GM12878 (cell line): ENCODE measurements at regions of chr5 and their contacts with region 1.

Region 1: DNA sequence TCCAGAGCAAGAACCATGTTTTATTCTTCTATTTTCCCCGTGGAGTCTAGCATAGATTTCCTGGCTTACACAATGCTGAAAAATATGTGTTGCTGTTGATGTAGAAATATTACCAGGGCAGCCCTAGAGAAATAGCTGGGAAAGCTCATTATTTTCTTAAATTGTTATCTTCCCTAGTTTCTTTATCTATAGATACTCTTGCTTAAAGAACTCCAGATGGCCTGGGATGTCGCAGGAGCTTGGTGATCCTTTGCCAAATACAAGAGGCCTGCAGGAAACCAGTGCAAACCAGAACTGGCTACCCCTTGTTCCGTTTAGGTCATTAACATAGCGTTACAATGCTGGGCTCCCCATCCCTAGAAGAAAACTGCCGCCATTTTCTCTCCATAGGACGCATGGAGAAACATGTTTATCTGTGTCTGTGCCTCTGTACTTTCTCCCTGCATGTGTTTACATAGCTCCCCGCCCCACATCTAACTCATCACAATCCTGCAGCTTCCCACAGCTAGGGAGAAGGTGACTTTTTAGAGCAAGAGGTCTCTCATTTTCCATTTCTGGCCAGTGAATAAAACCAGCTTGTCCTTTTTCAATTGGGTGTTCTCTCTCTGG is 6.4 kb downstream of the PRLR start:
- DNase-seq: no peak
- ATAC-seq: no peak
- H3K4me3 ChIP-seq: no peak overlapping the region
- H3K27ac ChIP-seq: no peak overlapping the region
- H3K4me1 ChIP-seq: no peaks in the 10 kb centered on the region
- H3K27me3 ChIP-seq: no peaks in the 10 kb centered on the region; a peak in 2 of 4 replicates
- CTCF ChIP-seq: no peak
- EP300 ChIP-seq: no peak
- POLR2A ChIP-seq: no peak
- RAD21 ChIP-seq: no peak

Region 2: GRCh38 chr5:33556330-33557328 is 1667.3 kb before region 1 on chr5:
- CTCF ChIA-PET with region 1: no interaction called
- POLR2A ChIA-PET with region 1: no interaction called
- RAD21 ChIA-PET with region 1: no interaction called
- SMC1A ChIA-PET with region 1: no interaction called
- in situ Hi-C with region 1: no loop called
- intact Hi-C with region 1: no loop called
- DNase-seq: no peak
- ATAC-seq: no peak
- H3K4me3 ChIP-seq: no peak overlapping the region
- H3K27ac ChIP-seq: no peak overlapping the region
- H3K4me1 ChIP-seq: no peaks in the 10 kb centered on the region
- H3K27me3 ChIP-seq: no peaks in the 10 kb centered on the region
- CTCF ChIP-seq: no peak
- EP300 ChIP-seq: no peak
- POLR2A ChIP-seq: no peak
- RAD21 ChIP-seq: no peak

Region 3: GRCh38 chr5:34695275-34696027 is 528.4 kb before region 1 on chr5:
- CTCF ChIA-PET with region 1: no interaction called
- POLR2A ChIA-PET with region 1: no interaction called
- RAD21 ChIA-PET with region 1: no interaction called
- SMC1A ChIA-PET with region 1: no interaction called
- in situ Hi-C with region 1: no loop called
- intact Hi-C with region 1: no loop called
- DNase-seq: no peak
- ATAC-seq: peak; percentile 73
- H3K4me3 ChIP-seq: no peak overlapping the region
- H3K27ac ChIP-seq: no peak overlapping the region
- H3K4me1 ChIP-seq: no peaks in the 10 kb centered on the region
- H3K27me3 ChIP-seq: no peaks in the 10 kb centered on the region
- CTCF ChIP-seq: no peak
- EP300 ChIP-seq: no peak
- POLR2A ChIP-seq: no peak
- RAD21 ChIP-seq: no peak

Region 4: DNA sequence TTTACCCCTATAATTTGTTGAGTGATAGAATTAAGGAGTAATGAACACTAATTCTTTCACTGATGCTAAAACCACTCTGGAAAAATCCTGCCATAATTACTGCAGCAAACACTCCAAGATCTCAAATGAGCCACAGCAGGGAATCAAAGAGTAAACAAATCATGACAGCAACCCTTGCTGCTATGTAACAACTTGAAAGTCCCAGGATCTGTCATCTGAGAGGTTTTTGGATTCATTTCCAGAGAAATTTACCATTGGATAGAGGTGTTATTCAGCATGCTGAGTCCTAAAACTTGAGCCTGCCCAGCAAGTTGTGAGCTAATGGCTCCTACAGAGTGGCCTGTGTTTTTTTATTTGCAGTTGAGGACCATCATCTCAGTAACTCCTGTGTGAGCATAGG is 52.8 kb before region 1 on chr5:
- CTCF ChIA-PET with region 1: no interaction called
- POLR2A ChIA-PET with region 1: no interaction called
- RAD21 ChIA-PET with region 1: no interaction called
- SMC1A ChIA-PET with region 1: no interaction called
- in situ Hi-C with region 1: no loop called
- intact Hi-C with region 1: no loop called
- DNase-seq: no peak
- ATAC-seq: no peak
- H3K4me3 ChIP-seq: no peak overlapping the region
- H3K27ac ChIP-seq: no peak overlapping the region
- H3K4me1 ChIP-seq: no peaks in the 10 kb centered on the region
- H3K27me3 ChIP-seq: no peaks in the 10 kb centered on the region
- CTCF ChIP-seq: no peak
- EP300 ChIP-seq: no peak
- POLR2A ChIP-seq: no peak
- RAD21 ChIP-seq: no peak

Region 5: GRCh38 chr5:35202319-35203111 is 21.4 kb before region 1 on chr5:
- CTCF ChIA-PET with region 1: interaction called, 14 read pairs
- POLR2A ChIA-PET with region 1: interaction called, 4 read pairs
- RAD21 ChIA-PET with region 1: interaction called, 12 read pairs
- SMC1A ChIA-PET with region 1: interaction called, 224 read pairs
- in situ Hi-C with region 1: no loop called
- intact Hi-C with region 1: no loop called
- DNase-seq: no peak
- ATAC-seq: peak; percentile 88
- H3K4me3 ChIP-seq: no peak overlapping the region
- H3K27ac ChIP-seq: no peak overlapping the region
- H3K4me1 ChIP-seq: no peaks in the 10 kb centered on the region
- H3K27me3 ChIP-seq: no peaks in the 10 kb centered on the region
- CTCF ChIP-seq: peak; percentile 35 to 48 (median 45); a peak in 5 of 6 replicates
- EP300 ChIP-seq: no peak
- POLR2A ChIP-seq: no peak
- RAD21 ChIP-seq: peak; percentile 44

Region 6: GRCh38 chr5:35393901-35394300 is 170.0 kb after region 1 on chr5:
- CTCF ChIA-PET with region 1: no interaction called
- POLR2A ChIA-PET with region 1: no interaction called
- RAD21 ChIA-PET with region 1: no interaction called
- SMC1A ChIA-PET with region 1: no interaction called
- in situ Hi-C with region 1: no loop called
- intact Hi-C with region 1: no loop called
- DNase-seq: peak; percentile 20
- ATAC-seq: peak; percentile 16
- H3K4me3 ChIP-seq: no peak overlapping the region
- H3K27ac ChIP-seq: no peak overlapping the region
- H3K4me1 ChIP-seq: no peaks in the 10 kb centered on the region
- H3K27me3 ChIP-seq: no peaks in the 10 kb centered on the region
- CTCF ChIP-seq: no peak
- EP300 ChIP-seq: no peak
- POLR2A ChIP-seq: no peak
- RAD21 ChIP-seq: no peak